ENCODE measurements at regions of chr5 and their contacts with region 1.

Region 1: GRCh38 chr5:139422307-139422893 is 16.9 kb downstream of the DNAJC18 start:
- DNase-seq: no peak
- ATAC-seq: peak; percentile 87
- H3K4me3 Mint-ChIP-seq: no peak overlapping the region
- H3K27ac Mint-ChIP-seq: peak overlapping the region; percentile 9
- H3K4me1 Mint-ChIP-seq: peaks cover 15% of the 10 kb centered on the region
- H3K27me3 Mint-ChIP-seq: peaks cover 2% of the 10 kb centered on the region

Region 2: GRCh38 chr5:139513852-139514485 is 91.6 kb after region 1 on chr5:
- POLR2A ChIA-PET with region 1: interaction called, 21 read pairs
- DNase-seq: no peak
- ATAC-seq: no peak
- H3K4me3 Mint-ChIP-seq: no peak overlapping the region
- H3K27ac Mint-ChIP-seq: no peak overlapping the region
- H3K4me1 Mint-ChIP-seq: peaks cover 44% of the 10 kb centered on the region
- H3K27me3 Mint-ChIP-seq: peaks cover 5% of the 10 kb centered on the region